IMR-90 (cell line): ENCODE measurements at regions of chrX and their contacts with region 1.

Region 1: DNA sequence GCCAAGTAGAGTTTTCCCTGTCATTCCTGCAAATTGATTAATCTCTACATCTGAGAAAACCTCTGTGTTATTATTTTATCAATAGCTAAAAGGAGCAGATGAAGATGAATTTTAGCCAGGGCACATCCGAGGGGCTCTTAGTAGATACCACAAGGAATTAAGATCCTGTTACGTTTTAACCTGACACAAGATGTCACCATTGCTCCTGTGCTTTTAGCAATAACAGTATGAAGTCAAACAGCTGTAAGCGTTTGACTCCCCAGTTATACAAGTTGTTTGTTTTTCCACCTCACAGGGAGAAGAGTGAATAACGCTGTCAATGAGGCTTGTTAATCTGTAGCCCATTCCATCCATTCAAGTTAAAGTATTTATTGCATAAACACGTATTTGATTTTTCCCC is 76.0 kb upstream of the AP1S2 start:
- DNase-seq: peak; percentile 66
- ATAC-seq: peak; percentile 60
- H3K4me3 ChIP-seq: no peak overlapping the region
- H3K27ac ChIP-seq: no peak overlapping the region
- H3K4me1 ChIP-seq: no peaks in the 10 kb centered on the region; the same call in 1 of the 2 replicates
- H3K27me3 ChIP-seq: peaks cover 4% of the 10 kb centered on the region; the same call in 1 of the 2 replicates
- CTCF ChIP-seq: peak; percentile 42
- POLR2A ChIP-seq: no peak
- RAD21 ChIP-seq: peak; percentile 61

Region 2: DNA sequence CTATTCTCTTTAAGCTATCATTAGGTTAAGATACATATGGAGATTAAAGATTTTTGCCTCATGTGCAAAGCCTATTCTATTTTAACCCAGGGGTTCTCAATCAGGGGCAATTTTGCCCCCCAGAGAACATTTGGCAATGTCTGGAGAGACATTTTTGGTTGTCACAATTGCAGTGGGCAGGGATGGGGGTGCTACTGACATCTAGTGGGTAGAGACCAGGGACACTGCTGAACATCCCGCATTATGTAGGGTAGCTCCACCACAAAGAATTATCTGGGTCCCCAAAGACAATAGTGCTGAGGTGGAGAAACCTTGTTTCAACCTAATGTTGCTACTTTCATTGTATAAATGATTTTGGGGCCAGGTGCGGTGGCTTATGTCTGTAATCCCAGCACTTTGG is 205.7 kb before region 1 on chrX:
- CTCF ChIA-PET with region 1: no interaction called
- POLR2A ChIA-PET with region 1: no interaction called
- dilution Hi-C with region 1: no loop called
- in situ Hi-C with region 1: no loop called
- intact Hi-C with region 1: no loop called
- DNase-seq: no peak
- ATAC-seq: no peak
- H3K4me3 ChIP-seq: no peak overlapping the region
- H3K27ac ChIP-seq: no peak overlapping the region
- H3K4me1 ChIP-seq: no peaks in the 10 kb centered on the region
- H3K27me3 ChIP-seq: no peaks in the 10 kb centered on the region
- CTCF ChIP-seq: no peak
- POLR2A ChIP-seq: no peak
- RAD21 ChIP-seq: no peak

Region 3: DNA sequence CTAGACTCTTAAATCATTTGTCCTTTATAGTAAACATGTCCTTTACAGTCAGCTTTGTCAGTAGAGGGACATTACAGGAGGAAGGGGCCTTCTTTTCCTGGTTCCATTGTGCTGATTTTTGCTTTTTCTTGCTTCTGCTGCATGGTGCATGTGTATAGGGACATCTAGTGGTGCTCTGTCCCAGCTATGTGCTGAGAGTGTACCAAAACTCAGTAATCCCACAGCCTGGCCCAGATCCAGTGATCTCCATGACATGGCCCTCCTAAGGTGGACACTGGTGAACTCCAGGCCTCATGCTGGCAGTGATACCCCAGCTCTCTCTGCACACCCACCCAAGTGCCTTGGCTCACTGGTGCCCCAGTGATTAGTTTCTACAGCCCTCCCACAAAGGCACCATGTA is 281.9 kb after region 1 on chrX:
- CTCF ChIA-PET with region 1: interaction called, 6 read pairs
- POLR2A ChIA-PET with region 1: no interaction called
- dilution Hi-C with region 1: no loop called
- in situ Hi-C with region 1: no loop called
- intact Hi-C with region 1: loop called (anchors 1 kb)
- DNase-seq: peak; percentile 34
- ATAC-seq: peak; percentile 69; the same call in 1 of the 2 replicates
- H3K4me3 ChIP-seq: no peak overlapping the region
- H3K27ac ChIP-seq: no peak overlapping the region
- H3K4me1 ChIP-seq: no peaks in the 10 kb centered on the region
- H3K27me3 ChIP-seq: no peaks in the 10 kb centered on the region
- CTCF ChIP-seq: peak; percentile 43
- POLR2A ChIP-seq: no peak
- RAD21 ChIP-seq: peak; percentile 59

Region 4: DNA sequence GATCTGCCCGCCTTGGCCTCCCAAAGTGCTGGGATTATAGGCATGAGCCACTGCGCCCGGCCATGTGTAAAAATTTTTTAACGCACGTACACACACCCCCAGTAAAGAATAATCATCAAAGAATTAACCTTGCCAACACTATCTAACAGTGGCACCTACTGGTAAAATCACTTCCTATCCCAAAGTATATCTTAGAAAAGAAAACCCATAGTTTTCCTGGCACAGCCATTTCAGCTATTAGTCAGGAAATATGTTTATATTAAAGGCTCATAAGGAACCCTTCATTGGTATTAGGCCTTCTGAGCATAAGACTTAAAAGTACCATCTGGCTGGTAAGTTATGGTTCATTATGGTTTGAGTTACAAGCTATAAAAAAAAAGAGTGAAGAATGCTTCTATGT is 733.5 kb after region 1 on chrX:
- CTCF ChIA-PET with region 1: interaction called, 3 read pairs
- POLR2A ChIA-PET with region 1: no interaction called
- dilution Hi-C with region 1: no loop called
- in situ Hi-C with region 1: no loop called
- intact Hi-C with region 1: loop called (anchors 1 kb)
- DNase-seq: peak; percentile 67
- ATAC-seq: peak; percentile 56
- H3K4me3 ChIP-seq: no peak overlapping the region
- H3K27ac ChIP-seq: no peak overlapping the region
- H3K4me1 ChIP-seq: peaks cover 11% of the 10 kb centered on the region
- H3K27me3 ChIP-seq: no peaks in the 10 kb centered on the region; the same call in 1 of the 2 replicates
- CTCF ChIP-seq: peak; percentile 57
- POLR2A ChIP-seq: no peak
- RAD21 ChIP-seq: peak; percentile 61